Activated T-helper 2 cell treated with anti-CD3 and anti-CD28 coated beads, Interferon-gamma antibody, Interleukin-2, Interleukin-4, amounts not matched to agents 10 μg/mL and 5 μg/mL and 100 μg/mL, durations not matched to agents 14 hours and 24 hours and 36 hours (primary cell): ENCODE measurements at regions of chrX and their contacts with region 1.

Region 1: GRCh38 chrX:119482481-119483480 is 14.5 kb downstream of the SLC25A5 start:
- DNase-seq: peak; percentile 51
- H3K4me3 Mint-ChIP-seq: peak overlapping the region; percentile 58
- H3K27ac Mint-ChIP-seq: peak overlapping the region; percentile 46
- H3K4me1 Mint-ChIP-seq: peaks cover 12% of the 10 kb centered on the region
- H3K27me3 Mint-ChIP-seq: no peaks in the 10 kb centered on the region

Region 2: GRCh38 chrX:119502727-119503483 is 20.1 kb after region 1 on chrX:
- intact Hi-C with region 1: no loop called
- DNase-seq: no peak
- H3K4me3 Mint-ChIP-seq: no peak overlapping the region
- H3K27ac Mint-ChIP-seq: no peak overlapping the region
- H3K4me1 Mint-ChIP-seq: peaks cover 3% of the 10 kb centered on the region
- H3K27me3 Mint-ChIP-seq: no peaks in the 10 kb centered on the region

Region 3: DNA sequence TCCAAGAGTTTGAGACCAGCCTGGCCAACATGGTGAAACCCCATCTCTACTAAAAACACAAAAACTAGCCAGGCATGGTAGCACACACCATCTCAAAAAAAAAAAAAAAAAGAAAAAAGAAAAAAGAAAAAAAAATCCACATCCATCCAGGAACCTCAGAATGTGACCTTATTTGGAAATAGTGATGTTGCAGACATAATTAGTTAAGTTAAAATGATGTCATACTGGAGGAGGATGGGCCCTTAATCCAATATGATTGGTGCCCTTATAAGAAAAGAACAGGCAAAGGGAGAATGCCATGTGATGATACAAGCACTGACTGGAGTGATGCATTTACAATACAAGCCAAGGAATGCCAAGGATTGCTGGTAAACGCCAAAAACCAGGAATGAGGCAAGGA is 74.6 kb after region 1 on chrX:
- intact Hi-C with region 1: no loop called
- DNase-seq: no peak
- H3K4me3 Mint-ChIP-seq: no peak overlapping the region
- H3K27ac Mint-ChIP-seq: no peak overlapping the region
- H3K4me1 Mint-ChIP-seq: no peaks in the 10 kb centered on the region
- H3K27me3 Mint-ChIP-seq: no peaks in the 10 kb centered on the region

Region 4: DNA sequence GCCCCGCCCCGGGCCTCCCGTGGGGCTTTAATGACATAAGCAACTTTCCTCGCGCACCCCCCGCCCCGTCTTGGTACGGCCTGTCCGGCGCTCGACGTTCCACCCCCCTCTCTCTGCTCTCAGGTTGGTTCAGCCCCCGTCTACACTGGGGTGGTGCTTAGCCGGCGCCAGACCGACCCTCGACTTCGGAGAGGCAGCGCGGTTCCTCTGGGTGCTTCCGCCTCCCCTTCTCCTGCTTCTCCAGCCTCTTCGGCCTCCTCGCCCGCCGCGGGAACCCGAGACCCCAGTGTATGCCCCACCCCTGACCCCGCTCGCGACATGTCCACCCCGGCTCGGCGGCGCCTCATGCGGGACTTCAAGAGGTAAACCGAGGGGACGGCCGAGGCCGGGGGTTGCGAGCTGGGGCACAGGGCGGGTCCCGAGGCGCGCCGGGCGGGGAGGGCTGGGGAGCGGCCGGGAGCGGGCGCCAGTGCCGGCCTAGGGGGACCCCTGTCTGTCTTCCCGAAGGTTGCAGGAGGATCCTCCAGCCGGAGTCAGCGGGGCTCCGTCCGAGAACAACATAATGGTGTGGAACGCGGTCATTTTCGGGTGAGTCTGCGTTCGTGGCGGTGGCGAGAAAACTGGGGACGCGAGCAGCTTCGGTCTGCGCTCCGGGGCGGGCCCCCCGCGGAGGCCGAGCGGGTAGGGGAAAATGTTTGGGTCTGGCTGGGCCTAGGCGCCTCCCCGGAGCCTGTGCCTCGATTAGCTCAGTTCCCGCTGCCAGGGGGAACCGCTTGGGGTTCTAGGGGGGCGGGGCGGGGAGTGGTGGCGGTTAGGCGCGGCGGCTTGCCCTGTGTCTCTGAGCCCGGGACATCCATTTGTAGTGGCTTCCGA is 91.8 kb after region 1 on chrX and contains the start of gene UBE2A:
- intact Hi-C with region 1: loop called (anchors 10 kb)
- DNase-seq: peak; percentile 82
- H3K4me3 Mint-ChIP-seq: peak within 1 kb of the TSS; percentile 91
- H3K27ac Mint-ChIP-seq: peak within 1 kb of the TSS; percentile 90
- H3K4me1 Mint-ChIP-seq: peaks cover 15% of the 10 kb centered on the region
- H3K27me3 Mint-ChIP-seq: no peaks in the 10 kb centered on the region
- total RNA-seq, gene UBE2A: 60.6 and 61.6 TPM in 2 replicates

Region 5: DNA sequence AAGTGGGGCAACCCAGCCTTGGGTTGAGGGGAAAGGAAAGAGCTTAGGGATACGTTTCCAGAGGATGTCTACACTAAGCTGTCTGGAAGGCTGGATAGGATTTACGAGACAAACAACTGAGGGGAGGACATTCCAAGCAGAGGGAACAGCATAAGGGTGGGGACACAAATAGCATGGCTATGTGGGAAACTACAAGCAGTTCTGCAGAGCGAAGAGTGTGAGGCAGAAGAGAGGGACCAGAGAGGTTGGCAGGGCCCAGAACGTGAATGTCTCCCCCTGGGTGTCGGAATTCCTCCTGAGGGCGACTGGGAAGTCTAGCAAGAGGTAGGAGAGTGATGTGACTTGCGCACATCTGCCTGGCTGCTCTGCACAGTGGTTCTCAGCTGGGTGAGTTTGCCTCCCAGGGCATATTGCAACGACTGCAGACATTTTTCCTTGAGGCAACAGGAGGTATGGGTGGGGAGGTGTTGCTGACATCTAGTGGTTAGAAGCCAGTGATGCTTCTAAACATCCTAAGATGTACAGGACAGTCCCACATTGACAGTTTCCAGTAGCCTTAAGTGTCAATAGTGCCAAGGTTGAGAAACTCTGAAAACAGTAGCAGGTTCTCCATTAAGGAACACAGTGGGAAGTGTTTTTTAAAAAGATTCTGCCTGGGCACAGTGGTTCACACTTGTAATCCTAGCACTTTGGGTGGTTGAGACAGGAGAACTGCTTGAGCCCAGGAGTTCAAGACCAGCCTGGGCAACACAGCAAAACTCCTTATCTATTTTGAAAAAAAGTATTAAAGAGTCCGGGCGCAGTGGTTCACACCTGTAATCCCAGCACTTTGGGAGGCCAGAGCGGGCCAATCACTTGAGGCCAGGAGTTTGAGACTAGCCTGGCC is 398.0 kb after region 1 on chrX:
- intact Hi-C with region 1: loop called (anchors 10 kb)
- DNase-seq: no peak
- H3K4me3 Mint-ChIP-seq: no peak overlapping the region
- H3K27ac Mint-ChIP-seq: peak overlapping the region; percentile 6
- H3K4me1 Mint-ChIP-seq: peaks cover 9% of the 10 kb centered on the region
- H3K27me3 Mint-ChIP-seq: no peaks in the 10 kb centered on the region